Activated B cell treated with CpG ODN at 0.5 μM for 24 hours (primary cell): ENCODE measurements at regions of chr15 and their contacts with region 1.

Region 1: DNA sequence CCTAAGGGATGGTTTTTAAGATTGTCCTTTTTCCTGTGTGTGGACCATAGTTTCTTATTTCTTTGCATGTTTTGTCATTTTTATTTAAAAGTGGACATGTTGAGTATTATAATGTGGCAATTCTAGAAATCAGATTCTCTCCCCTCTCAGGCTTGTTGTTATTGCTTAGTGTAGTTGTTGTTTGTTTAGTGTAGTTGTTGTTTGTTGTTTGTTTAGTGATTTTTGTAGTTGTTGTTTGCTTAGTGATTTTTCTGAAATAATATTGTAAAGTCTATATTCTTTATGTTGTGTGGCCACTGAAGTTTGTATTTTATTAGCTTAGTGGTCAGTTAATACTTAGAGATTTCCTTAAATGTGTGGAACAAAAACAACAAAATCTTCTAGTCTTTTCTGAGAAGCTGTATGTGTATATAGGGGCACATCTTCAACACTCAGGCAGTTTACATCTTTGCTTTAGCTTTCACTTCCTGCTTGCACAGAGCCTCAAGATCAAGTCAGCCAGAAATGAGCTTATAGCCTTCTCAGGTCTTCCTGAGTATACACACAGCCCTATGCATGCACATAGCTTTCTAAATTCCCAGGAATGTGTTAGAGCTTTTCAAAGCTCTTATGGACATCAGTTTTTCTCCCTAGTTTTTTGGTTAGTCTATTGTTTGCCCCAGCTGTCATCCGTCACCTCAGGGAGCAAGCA is 22.3 kb upstream of the MTMR10 start:
- DNase-seq: no peak
- ATAC-seq: peak; percentile 97
- H3K4me3 Mint-ChIP-seq: peak overlapping the region; percentile 50
- H3K27ac Mint-ChIP-seq: peak overlapping the region; percentile 86
- H3K4me1 Mint-ChIP-seq: peaks cover 48% of the 10 kb centered on the region
- H3K27me3 Mint-ChIP-seq: no peaks in the 10 kb centered on the region
- CTCF ChIP-seq: no peak

Region 2: GRCh38 chr15:31031471-31032067 is 17.9 kb after region 1 on chr15:
- CTCF ChIA-PET with region 1: interaction called, 3 read pairs
- POLR2A ChIA-PET with region 1: no interaction called
- intact Hi-C with region 1: loop called (anchors 2 kb)
- DNase-seq: no peak
- ATAC-seq: peak; percentile 50
- H3K4me3 Mint-ChIP-seq: no peak overlapping the region
- H3K27ac Mint-ChIP-seq: peak overlapping the region; percentile 62
- H3K4me1 Mint-ChIP-seq: peaks cover 53% of the 10 kb centered on the region
- H3K27me3 Mint-ChIP-seq: peaks cover 2% of the 10 kb centered on the region
- CTCF ChIP-seq: no peak